Activated T-helper 2 cell treated with anti-CD3 and anti-CD28 coated beads, Interferon-gamma antibody, Interleukin-2, Interleukin-4, amounts not matched to agents 10 μg/mL and 5 μg/mL and 100 μg/mL, durations not matched to agents 14 hours and 24 hours and 36 hours (primary cell): ENCODE measurements at regions of chr14 and their contacts with region 1.

Region 1: GRCh38 chr14:54627540-54628363 is 60.8 kb downstream of the SAMD4A start:
- DNase-seq: peak; percentile 27
- H3K4me3 Mint-ChIP-seq: peak overlapping the region; percentile 52
- H3K27ac Mint-ChIP-seq: peak overlapping the region; percentile 76
- H3K4me1 Mint-ChIP-seq: peaks cover 44% of the 10 kb centered on the region
- H3K27me3 Mint-ChIP-seq: no peaks in the 10 kb centered on the region

Region 2: DNA sequence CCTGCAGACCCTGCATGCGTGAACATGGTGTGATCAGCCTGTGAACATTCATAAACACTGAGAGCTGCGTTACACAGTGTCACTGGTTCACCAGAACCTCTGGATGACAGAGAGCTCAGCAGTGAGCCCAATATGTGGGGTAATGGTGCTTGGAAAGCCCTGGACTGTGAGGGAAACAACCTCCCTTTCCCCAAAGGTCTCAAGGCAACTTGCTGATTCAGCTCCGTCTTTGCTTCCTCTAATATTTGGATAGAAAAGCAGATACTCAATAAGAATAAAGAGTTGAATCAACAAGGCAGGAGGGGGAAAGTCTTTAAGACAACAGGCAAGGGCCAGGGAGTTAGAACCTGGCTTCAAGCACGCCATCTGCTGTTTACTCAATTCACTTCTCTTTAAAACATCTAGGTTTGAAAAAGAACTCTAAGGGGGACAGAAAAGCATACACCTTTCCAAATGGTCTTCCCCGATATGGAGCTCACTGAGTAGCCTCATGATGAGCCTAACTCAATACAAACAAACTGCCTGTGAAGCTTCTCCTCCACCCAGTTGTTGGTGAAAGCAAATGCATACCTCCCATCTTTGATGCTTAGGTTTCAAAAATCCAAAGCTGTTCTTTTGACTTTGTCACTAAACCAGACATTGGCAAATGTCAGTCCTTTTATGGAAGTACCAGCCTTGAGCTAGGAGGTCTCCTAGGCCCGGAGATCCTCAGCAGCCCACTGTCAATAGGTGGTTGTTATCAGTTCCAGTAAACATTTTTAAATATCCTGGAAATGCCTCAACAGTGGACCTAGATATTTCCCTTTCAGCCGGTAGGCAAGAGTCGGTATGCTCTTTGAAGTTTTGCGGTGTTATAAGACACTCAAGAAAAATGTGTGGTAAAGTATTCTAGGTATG is 15.3 kb after region 1 on chr14:
- intact Hi-C with region 1: loop called (anchors 2 kb)
- DNase-seq: no peak
- H3K4me3 Mint-ChIP-seq: no peak overlapping the region
- H3K27ac Mint-ChIP-seq: no peak overlapping the region
- H3K4me1 Mint-ChIP-seq: peaks cover 13% of the 10 kb centered on the region
- H3K27me3 Mint-ChIP-seq: peaks cover 19% of the 10 kb centered on the region

Region 3: DNA sequence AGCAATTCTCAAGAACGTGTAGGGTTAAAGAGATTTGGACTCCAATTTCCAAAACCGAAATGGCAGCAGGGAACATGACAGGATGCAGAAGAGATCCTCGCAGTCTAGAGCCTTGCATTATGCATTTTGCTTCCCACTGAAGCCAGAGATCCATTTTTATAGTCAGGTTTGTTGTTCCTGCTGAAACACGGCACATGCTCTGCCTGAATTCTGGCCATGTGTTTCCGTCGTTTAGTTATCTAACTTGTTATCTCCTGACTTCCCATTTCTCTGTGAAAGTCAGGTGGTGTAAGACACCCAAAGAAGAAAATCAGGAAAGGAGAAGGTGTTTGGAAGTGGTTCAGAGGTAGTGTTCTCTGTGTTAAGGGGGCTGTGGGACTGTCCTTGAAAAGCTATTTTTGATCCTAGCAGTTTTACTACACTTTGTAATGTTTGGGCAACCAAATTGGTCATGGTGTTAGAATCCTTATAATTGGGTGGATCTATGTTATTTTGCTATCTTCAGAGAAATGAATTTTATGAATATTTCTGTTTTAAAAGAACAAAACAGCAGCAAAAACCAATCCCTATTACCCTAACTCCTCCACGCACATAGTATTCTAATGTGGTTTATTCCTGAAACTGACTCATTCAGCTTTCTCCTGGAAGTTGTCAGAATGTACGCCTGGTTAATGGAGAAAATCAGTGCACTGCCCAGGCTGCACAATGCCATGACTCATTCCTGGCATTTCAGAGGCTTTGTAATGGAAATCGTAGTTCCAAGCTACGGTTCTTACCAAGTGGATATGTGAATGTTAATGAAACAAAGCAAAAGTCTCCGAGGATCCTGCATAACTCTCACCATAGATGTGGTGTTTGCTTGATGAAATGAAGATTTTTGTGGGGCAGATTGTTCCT is 49.3 kb after region 1 on chr14:
- intact Hi-C with region 1: loop called (anchors 10 kb)
- DNase-seq: no peak
- H3K4me3 Mint-ChIP-seq: no peak overlapping the region
- H3K27ac Mint-ChIP-seq: no peak overlapping the region
- H3K4me1 Mint-ChIP-seq: peaks cover 27% of the 10 kb centered on the region
- H3K27me3 Mint-ChIP-seq: peaks cover 36% of the 10 kb centered on the region